Cardiac septum (tissue), 1 donor: ENCODE measurements at regions of chr9 and their contacts with region 1.

Region 1: DNA sequence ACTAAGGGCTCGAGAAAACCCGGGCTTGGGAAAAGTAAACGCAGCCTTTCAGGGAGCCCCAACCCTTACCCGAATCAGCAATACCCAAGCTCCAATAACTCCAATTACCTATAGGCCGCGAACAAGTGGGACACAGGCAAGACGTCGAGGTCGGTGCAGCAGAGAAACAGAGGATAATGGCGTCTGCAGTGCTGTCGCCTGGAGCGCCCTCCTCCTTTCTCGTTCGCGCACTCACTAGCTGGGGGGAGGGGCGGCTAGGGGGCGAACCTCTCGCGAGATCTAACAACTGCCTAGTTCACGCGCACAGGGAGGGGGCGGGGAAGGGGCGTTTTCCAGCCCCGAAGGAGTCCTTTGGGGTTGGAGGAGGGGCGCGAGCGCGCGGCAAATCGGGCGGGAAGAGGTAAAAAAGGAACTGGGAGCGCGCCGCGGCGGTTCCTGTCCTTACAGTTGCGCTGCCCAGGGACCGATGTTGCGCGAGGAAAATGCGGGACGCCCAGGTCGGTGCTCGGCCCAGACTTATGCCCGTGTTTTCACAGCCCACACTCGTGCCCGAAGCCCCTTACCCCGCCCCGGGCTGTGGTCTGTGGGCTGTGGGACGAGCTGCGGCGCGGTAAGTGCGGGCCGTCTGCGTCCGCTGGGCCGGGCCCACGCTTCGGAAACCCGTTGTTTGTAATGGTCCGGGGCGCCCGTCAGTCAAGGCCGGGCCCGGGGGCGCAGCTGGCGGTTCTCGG is at the start of gene RMI1:
- DNase-seq: peak; percentile 100
- total RNA-seq, gene RMI1: 3.9 TPM

Region 2: GRCh38 chr9:83937911-83938323 is 42.6 kb before region 1 on chr9:
- intact Hi-C with region 1: no loop called
- DNase-seq: peak; percentile 29

Region 3: GRCh38 chr9:84061594-84062193 is 81.1 kb after region 1 on chr9:
- intact Hi-C with region 1: loop called (anchors 5 kb)
- DNase-seq: no peak